PC-3 (cell line): ENCODE measurements at regions of chr10 and their contacts with region 1.

Region 1: DNA sequence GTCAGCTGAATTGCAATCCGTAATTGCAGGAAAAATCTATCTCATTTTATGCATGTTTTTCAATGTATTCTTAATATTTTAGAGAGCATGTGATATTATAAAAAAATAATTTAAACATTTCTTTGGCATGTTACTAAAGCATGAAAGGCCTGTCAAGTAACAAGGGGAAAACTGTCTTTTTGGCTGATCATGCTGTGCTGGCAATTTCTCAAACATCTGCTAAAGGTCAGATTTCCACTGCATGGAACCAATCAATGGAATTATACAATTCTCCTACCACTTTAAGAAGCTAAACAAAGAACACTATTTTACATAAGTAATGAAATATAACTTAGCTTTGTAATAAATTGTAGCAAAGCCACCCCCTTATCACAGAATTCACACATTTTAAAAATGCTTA is 49.4 kb downstream of the JMJD1C start:
- DNase-seq: no peak
- ATAC-seq: no peak
- H3K4me3 ChIP-seq: no peak overlapping the region
- H3K27ac ChIP-seq: no peak overlapping the region
- H3K4me1 ChIP-seq: peaks cover 43% of the 10 kb centered on the region
- H3K27me3 ChIP-seq: no peaks in the 10 kb centered on the region
- CTCF ChIP-seq: no peak

Region 2: DNA sequence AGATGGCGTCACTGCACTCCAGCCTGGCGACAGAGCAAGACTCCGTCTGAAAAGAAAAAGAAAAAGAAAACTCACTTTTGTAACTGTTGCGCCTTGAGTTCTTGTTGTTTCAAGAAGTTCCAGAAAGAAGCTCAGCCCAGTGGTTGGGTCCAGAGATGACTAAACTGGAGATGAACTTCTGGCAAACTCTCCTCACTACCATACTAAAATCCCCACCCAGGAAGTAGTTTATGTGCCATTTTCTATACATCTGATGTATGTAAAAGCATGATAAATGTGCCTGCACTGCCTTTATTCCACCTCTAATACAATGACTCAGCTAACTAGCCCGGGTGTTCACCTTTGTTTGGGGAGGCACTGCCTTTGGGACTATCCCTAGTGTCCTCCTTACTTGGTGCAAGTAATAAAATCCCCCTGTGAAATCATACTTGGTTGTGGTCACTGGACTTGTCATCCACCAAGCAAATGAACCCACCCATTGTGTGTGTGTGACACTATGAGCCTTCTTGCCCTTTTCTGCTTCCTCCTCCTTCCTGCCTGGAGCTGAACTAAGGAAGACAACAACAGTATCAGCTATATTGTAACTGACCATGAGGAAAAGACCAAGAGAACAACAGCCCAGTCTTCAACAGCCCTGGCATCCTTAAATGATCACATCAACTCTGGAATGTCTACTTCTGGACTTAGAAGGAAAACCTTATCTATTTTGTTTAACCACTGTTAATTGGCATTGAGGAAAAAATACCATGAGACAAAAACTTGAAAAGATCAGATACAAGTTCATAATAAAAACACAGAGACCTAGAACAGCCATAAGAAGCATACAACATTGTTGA is 15.8 kb after region 1 on chr10:
- CTCF ChIA-PET with region 1: no interaction called
- POLR2A ChIA-PET with region 1: interaction called, 3 read pairs
- intact Hi-C with region 1: loop called (anchors 1 kb)
- DNase-seq: peak; percentile 98
- ATAC-seq: peak; percentile 55
- H3K4me3 ChIP-seq: no peak overlapping the region
- H3K27ac ChIP-seq: peak overlapping the region; percentile 71
- H3K4me1 ChIP-seq: peaks cover 65% of the 10 kb centered on the region
- H3K27me3 ChIP-seq: no peaks in the 10 kb centered on the region
- CTCF ChIP-seq: no peak

Region 3: GRCh38 chr10:63481815-63482421 is 65.5 kb after region 1 on chr10:
- CTCF ChIA-PET with region 1: no interaction called
- POLR2A ChIA-PET with region 1: no interaction called
- intact Hi-C with region 1: no loop called
- DNase-seq: no peak
- ATAC-seq: no peak
- H3K4me3 ChIP-seq: no peak overlapping the region
- H3K27ac ChIP-seq: no peak overlapping the region
- H3K4me1 ChIP-seq: no peaks in the 10 kb centered on the region
- H3K27me3 ChIP-seq: no peaks in the 10 kb centered on the region
- CTCF ChIP-seq: no peak